ENCODE measurements at regions of chr2 and their contacts with region 1.

Region 1: DNA sequence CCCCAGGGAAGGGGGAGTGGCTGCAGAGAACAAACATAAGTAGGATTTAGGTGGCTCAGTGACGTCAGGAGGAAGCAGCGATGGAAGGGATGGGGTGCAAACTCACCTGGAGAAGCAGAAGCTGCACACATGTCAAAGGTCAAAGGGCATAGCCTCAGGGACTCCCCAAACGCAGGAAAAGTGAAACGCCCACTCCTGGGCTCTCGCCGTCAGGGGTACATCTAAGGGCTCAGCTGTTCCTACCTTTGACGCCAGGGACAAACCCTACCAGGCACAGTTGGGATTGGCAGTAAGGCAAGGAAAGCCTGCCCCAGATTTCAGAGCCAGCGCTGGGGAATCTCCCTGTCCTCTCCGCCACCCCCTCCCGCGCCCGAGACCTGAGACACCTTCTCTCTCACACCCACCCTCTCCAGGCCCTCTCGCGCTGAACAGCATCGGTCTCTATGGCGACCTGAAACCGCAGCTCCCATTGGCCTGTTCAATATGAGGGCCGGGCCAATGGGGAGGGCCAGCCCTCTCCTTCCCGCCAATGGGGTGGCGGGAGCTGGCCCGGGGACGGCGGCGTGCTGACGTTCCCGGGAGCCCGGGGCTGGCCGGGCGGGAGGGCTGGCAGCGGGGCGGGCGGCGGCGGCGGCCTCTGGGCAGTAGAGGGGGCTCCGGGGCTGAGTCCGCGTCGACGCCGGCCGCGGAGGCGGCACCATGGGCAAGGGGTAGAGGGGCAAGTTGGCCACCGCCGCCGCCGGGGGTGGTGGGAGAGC is at the starts of genes CCDC148 and PKP4:
- DNase-seq: peak; percentile 78 to 94
- H3K4me3 ChIP-seq: peak within 1 kb of the TSS; percentile 70 to 95
- H3K27ac ChIP-seq: peak within 1 kb of the TSS; percentile 94 to 96
- H3K4me1 ChIP-seq: peaks cover 6% of the 10 kb centered on the region in 2 donors
- H3K27me3 ChIP-seq: no peaks in the 10 kb centered on the region
- CTCF ChIP-seq: peak in 2 of 3 experiments; percentile 13 to 14
- total RNA-seq, gene CCDC148: not detected
- total RNA-seq, gene PKP4: 60.8 TPM

Region 2: GRCh38 chr2:157789933-157790511 is 666.5 kb before region 1 on chr2:
- intact Hi-C with region 1: loop called (anchors 5 kb)
- DNase-seq: peak; percentile 57 to 89
- H3K4me3 ChIP-seq: peak overlapping the region in 1 of 2 donors; percentile 2
- H3K27ac ChIP-seq: peak overlapping the region; percentile 70 to 77
- H3K4me1 ChIP-seq: peaks cover 14 to 66% of the 10 kb centered on the region in 2 donors
- H3K27me3 ChIP-seq: no peaks in the 10 kb centered on the region
- CTCF ChIP-seq: no peak

Region 3: DNA sequence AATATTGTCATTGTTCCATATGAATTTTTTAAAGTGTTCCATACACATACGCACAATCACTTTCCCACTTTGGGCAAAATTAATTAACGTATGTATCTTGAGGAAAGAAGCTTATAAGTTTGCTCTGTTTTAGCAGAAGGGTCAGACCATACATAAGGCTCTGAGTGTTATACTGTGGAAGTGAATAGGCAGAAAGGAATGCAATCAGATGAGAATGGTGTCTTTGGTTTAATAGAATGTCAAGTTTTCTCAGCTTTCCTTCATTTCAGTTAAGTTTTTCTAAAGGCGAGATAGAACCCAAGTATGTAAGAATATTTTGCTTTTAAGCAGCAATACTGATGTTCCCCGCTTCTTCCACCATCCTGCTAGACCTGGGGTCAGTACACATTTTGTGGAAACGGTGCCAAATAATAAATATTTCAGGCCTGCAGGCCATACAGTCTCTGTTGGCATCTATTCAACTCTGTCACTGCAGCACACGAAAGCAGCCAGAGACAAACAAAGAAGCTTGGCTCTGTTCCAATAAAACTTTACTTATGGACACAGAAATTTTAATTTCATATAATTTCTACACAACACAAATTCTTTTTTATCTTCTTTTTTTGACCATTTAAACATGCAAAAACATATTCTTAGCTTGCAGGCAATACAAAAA is 254.2 kb before region 1 on chr2:
- intact Hi-C with region 1: no loop called
- DNase-seq: no peak
- H3K4me3 ChIP-seq: no peak overlapping the region
- H3K27ac ChIP-seq: no peak overlapping the region
- H3K4me1 ChIP-seq: no peaks in the 10 kb centered on the region
- H3K27me3 ChIP-seq: no peaks in the 10 kb centered on the region
- CTCF ChIP-seq: no peak

Region 4: DNA sequence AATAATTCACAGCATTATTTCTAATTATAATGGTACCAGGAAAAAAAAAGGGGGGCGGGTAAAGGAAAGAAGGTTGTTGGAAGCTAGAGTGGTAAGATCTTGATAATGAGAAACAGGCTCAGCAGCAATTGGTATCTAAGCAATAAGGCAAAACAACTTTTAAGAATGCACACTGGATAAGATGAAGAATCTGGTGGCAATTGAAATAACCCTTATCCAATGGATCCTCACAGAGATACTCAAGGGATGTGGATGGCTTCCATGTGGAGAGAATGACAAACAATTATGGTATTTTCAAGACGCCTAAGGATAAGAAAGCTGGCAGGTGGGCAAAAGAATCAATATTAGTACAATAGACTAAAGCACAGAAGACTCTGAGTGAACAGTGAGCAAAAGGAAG is 201.2 kb before region 1 on chr2:
- intact Hi-C with region 1: no loop called
- DNase-seq: no peak
- H3K4me3 ChIP-seq: no peak overlapping the region
- H3K27ac ChIP-seq: no peak overlapping the region
- H3K4me1 ChIP-seq: no peaks in the 10 kb centered on the region
- H3K27me3 ChIP-seq: no peaks in the 10 kb centered on the region
- CTCF ChIP-seq: no peak

Region 5: GRCh38 chr2:158600155-158600802 is 143.8 kb after region 1 on chr2:
- intact Hi-C with region 1: loop called (anchors 2 kb)
- DNase-seq: peak in 1 of 2 donors; percentile 82
- H3K4me3 ChIP-seq: peak overlapping the region in 1 of 2 donors; percentile 10
- H3K27ac ChIP-seq: peak overlapping the region in 1 of 2 donors; percentile 23
- H3K4me1 ChIP-seq: peaks cover 0 to 7% of the 10 kb centered on the region in 2 donors
- H3K27me3 ChIP-seq: no peaks in the 10 kb centered on the region
- CTCF ChIP-seq: no peak

Region 6: DNA sequence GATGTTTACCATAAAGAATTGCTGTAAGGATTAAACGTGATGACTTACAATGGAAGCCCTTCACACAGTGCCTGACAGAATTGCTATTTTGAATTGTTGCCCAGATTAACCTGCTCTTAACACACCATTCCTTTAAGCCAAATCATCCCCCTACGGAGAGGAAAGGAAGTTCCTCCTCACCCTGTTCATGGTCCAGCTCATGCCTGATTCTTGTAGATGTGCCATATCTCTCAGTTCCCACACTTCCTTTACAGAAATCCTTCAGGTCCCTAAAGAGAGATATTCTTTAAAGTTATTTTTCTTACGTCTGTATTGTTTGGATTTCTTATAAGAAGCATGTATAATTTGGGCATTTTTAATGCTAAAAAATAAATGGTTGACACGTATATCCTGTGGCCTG is 211.1 kb after region 1 on chr2:
- intact Hi-C with region 1: loop called (anchors 10 kb)
- DNase-seq: no peak
- H3K4me3 ChIP-seq: no peak overlapping the region
- H3K27ac ChIP-seq: peak overlapping the region; percentile 18 to 49
- H3K4me1 ChIP-seq: peaks cover 0 to 3% of the 10 kb centered on the region in 2 donors
- H3K27me3 ChIP-seq: no peaks in the 10 kb centered on the region
- CTCF ChIP-seq: no peak

Region 7: GRCh38 chr2:158753641-158754611 is 297.4 kb after region 1 on chr2:
- intact Hi-C with region 1: loop called (anchors 5 kb)
- DNase-seq: no peak
- H3K4me3 ChIP-seq: peak overlapping the region in 1 of 2 donors; percentile 57
- H3K27ac ChIP-seq: no peak overlapping the region
- H3K4me1 ChIP-seq: peaks cover 0 to 6% of the 10 kb centered on the region in 2 donors
- H3K27me3 ChIP-seq: no peaks in the 10 kb centered on the region
- CTCF ChIP-seq: peak; percentile 61 to 87 (median 81)

Region 8: DNA sequence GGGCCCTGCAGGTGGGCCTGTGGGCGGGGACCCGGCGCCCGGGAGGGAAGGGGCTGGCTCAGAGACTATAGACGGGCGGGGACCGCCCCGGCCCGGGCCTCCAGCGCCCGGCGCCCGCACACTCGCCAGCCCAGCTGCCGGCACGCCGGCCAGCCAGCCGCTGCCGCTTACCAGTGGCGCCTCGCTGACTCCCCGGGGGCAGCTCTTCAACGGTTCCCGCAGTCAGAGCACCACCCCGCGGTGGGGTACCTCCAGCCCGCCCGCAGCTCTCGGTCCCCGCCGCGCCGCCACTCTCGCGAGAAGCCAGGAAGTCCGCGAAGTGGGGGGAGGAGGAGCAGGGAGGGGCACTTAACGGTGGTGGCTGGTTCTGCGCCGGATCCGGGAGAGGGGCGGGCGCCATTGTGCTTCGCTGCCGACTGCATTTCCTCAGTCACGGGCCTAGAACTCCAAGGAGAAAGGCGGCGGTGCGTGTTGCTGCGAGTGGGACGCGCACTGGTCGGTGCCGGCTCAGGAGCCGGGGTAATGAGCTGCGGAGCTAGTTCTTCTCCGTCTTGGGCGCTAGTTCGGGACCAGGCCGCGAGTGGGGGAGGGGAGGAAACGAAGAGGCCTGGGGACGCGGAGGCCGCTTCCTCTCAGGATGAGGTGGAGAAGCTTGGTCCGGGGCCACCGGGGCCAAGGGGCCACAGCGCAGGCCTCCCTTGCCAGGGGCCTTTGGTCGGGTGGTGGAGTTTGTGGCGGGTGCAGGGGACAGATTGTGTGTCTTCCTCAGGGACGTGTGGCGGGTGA is 1255.8 kb after region 1 on chr2 and contains the start of gene MARCHF7:
- intact Hi-C with region 1: loop called (anchors 5 kb)
- DNase-seq: peak; percentile 82 to 98
- H3K4me3 ChIP-seq: peak within 1 kb of the TSS; percentile 82 to 94
- H3K27ac ChIP-seq: peak within 1 kb of the TSS; percentile 97 to 98
- H3K4me1 ChIP-seq: peaks cover 3 to 31% of the 10 kb centered on the region in 2 donors
- H3K27me3 ChIP-seq: no peaks in the 10 kb centered on the region
- CTCF ChIP-seq: peak; percentile 16 to 51 (median 36)
- total RNA-seq, gene MARCHF7: 49.4 TPM

Region 9: DNA sequence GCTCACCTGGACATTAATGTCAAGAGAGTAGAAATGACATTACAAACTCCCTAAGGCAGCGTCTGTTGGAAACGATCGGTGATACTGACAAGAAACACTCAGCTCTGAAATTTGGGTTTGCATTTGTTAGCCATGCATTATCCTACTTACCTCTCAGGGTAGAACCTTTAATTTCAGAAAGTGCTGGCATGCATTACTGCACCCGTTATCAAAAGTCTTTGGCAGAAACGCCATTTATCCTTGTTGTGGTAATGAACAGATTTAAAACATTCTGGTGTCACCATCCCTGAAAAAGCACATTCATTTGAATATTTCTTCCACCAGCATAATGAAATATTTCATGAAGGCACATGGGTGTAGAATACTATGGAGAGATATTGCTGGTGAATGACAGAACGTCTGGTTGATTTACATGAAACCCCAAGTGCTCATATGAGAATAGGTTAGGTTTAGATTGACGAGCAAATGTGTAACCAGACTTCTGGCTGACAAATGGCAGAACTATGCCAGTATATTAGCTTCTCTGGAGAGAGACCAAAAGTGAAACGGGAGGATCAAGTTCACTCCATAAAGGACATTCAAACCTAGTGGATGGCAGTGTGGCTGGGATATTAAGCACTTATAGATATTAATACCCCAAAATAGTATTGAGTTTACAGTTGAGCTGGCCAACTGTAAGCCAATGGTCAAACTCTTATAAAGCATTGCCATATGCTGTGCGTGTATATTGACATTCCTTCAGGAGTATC is 1797.1 kb after region 1 on chr2:
- intact Hi-C with region 1: no loop called
- DNase-seq: no peak
- H3K4me3 ChIP-seq: no peak overlapping the region
- H3K27ac ChIP-seq: no peak overlapping the region
- H3K4me1 ChIP-seq: no peaks in the 10 kb centered on the region
- H3K27me3 ChIP-seq: no peaks in the 10 kb centered on the region
- CTCF ChIP-seq: no peak